Psoas muscle (tissue), 8 donors: ENCODE measurements at regions of chr14 and their contacts with region 1.

Region 1: GRCh38 chr14:75427482-75428229 is at the start of gene JDP2:
- DNase-seq: peak; percentile 95 to 98
- ATAC-seq: peak; percentile 80 to 86 (median 84)
- H3K4me3 ChIP-seq: peak within 1 kb of the TSS; percentile 80
- H3K27ac ChIP-seq: peak within 1 kb of the TSS; percentile 92
- H3K4me1 ChIP-seq: peaks cover 47% of the 10 kb centered on the region
- H3K27me3 ChIP-seq: no peaks in the 10 kb centered on the region
- CTCF ChIP-seq: peak; percentile 23
- total RNA-seq, gene JDP2: 11.0 to 49.6 (median 30.8) TPM

Region 2: GRCh38 chr14:75307700-75308379 is 119.8 kb before region 1 on chr14:
- intact Hi-C with region 1: loop called (anchors 5 kb)
- DNase-seq: peak; percentile 85 to 92
- ATAC-seq: peak; percentile 78 to 85 (median 81)
- H3K4me3 ChIP-seq: no peak overlapping the region
- H3K27ac ChIP-seq: no peak overlapping the region
- H3K4me1 ChIP-seq: peaks cover 13% of the 10 kb centered on the region
- H3K27me3 ChIP-seq: no peaks in the 10 kb centered on the region
- CTCF ChIP-seq: peak; percentile 94

Region 3: DNA sequence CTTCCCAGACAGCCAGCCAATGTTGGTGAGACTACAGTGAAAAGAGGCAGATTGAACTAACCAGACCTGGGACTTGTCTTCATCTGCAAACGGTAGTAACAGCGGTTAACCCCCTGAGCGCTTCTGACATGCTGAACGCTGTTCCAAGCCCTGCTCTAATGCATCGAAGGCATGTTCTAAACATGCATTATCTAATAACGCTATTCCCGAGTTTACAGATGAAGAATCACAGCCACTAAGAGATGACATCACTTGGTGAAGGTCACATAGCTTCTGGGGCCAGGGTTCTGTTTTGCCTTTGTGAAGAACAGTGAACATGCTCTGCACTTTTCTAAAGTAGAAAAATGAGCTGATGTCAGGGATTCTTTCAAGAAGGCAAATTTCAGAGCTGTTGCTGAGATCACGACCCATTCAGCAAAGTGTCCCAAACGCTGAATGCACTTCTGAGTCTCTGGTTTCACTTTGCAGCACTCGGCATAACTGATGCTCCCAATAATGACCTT is 93.1 kb before region 1 on chr14:
- intact Hi-C with region 1: loop called in 1 of 2 experiments (anchors 5 kb)
- DNase-seq: no peak
- ATAC-seq: no peak
- H3K4me3 ChIP-seq: no peak overlapping the region
- H3K27ac ChIP-seq: peak overlapping the region; percentile 44
- H3K4me1 ChIP-seq: peaks cover 23% of the 10 kb centered on the region
- H3K27me3 ChIP-seq: no peaks in the 10 kb centered on the region
- CTCF ChIP-seq: no peak

Region 4: DNA sequence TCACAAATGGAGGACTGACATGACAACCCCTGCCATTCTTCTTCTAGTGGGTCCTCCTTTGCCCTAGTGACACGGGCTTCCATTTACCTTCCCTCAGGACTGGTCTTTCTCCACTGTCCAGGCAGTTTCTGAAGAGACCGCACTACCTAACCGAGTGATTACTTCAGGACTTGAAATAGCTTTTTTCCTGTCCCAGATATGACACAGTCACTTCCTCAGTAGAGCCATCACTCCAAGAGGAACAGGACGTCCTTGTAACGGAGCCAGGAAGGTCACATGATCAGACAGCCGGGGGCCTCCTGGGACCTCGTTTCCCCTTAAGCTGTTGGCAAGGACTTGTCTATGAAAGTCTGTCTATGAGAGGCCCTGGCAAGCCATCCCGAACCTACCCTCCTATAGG is 86.7 kb before region 1 on chr14:
- intact Hi-C with region 1: loop called (anchors 2 to 5 kb)
- DNase-seq: peak; percentile 93 to 97
- ATAC-seq: peak; percentile 89 to 93 (median 92)
- H3K4me3 ChIP-seq: peak overlapping the region; percentile 51
- H3K27ac ChIP-seq: peak overlapping the region; percentile 92
- H3K4me1 ChIP-seq: peaks cover 41% of the 10 kb centered on the region
- H3K27me3 ChIP-seq: no peaks in the 10 kb centered on the region
- CTCF ChIP-seq: no peak

Region 5: GRCh38 chr14:75383721-75384120 is 43.9 kb before region 1 on chr14:
- intact Hi-C with region 1: no loop called
- DNase-seq: no peak
- ATAC-seq: no peak
- H3K4me3 ChIP-seq: no peak overlapping the region
- H3K27ac ChIP-seq: no peak overlapping the region
- H3K4me1 ChIP-seq: peaks cover 6% of the 10 kb centered on the region
- H3K27me3 ChIP-seq: no peaks in the 10 kb centered on the region
- CTCF ChIP-seq: no peak

Region 6: GRCh38 chr14:75469606-75470237 is 42.1 kb after region 1 on chr14:
- intact Hi-C with region 1: loop called in 1 of 2 experiments (anchors 5 kb)
- DNase-seq: peak in 1 of 2 donors; percentile 48
- ATAC-seq: peak; percentile 17 to 69 (median 24)
- H3K4me3 ChIP-seq: no peak overlapping the region
- H3K27ac ChIP-seq: peak overlapping the region; percentile 71
- H3K4me1 ChIP-seq: peaks cover 48% of the 10 kb centered on the region
- H3K27me3 ChIP-seq: no peaks in the 10 kb centered on the region
- CTCF ChIP-seq: no peak

Region 7: DNA sequence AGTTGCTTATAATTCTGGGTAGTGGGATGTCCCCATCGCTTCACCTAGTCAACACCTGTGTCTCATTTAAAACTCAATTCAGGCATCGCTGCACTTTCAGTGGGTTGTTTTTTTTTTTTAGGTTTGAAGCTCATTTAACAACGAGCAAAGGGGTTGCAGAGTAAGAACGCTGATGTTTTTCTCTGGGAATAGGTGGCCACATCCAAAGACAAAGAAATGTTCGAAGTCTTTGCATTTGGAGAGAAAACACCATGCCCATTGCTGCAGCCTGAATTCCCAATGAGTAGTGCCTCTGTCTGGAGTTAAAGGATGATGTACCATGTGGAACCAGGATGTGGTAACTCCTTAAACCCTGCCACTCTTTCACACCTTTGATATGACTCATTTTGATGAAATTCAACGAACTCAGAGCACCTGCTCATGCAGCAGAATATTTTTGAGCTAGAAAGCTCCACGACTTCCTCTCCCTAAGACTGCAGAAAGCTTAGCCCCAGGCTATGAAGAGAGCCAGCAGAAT is 59.6 kb after region 1 on chr14:
- intact Hi-C with region 1: loop called in 1 of 2 experiments (anchors 5 kb)
- DNase-seq: no peak
- ATAC-seq: no peak
- H3K4me3 ChIP-seq: no peak overlapping the region
- H3K27ac ChIP-seq: no peak overlapping the region
- H3K4me1 ChIP-seq: no peaks in the 10 kb centered on the region
- H3K27me3 ChIP-seq: no peaks in the 10 kb centered on the region
- CTCF ChIP-seq: no peak

Region 8: GRCh38 chr14:75560962-75561432 is 133.3 kb after region 1 on chr14:
- intact Hi-C with region 1: loop called in 1 of 2 experiments (anchors 5 kb)
- DNase-seq: peak; percentile 62 to 83
- ATAC-seq: peak; percentile 78 to 87 (median 85)
- H3K4me3 ChIP-seq: no peak overlapping the region
- H3K27ac ChIP-seq: no peak overlapping the region
- H3K4me1 ChIP-seq: peaks cover 29% of the 10 kb centered on the region
- H3K27me3 ChIP-seq: no peaks in the 10 kb centered on the region
- CTCF ChIP-seq: peak; percentile 79

Region 9: GRCh38 chr14:75675265-75675960 is 247.8 kb after region 1 on chr14:
- intact Hi-C with region 1: no loop called
- DNase-seq: no peak
- ATAC-seq: no peak
- H3K4me3 ChIP-seq: no peak overlapping the region
- H3K27ac ChIP-seq: no peak overlapping the region
- H3K4me1 ChIP-seq: no peaks in the 10 kb centered on the region
- H3K27me3 ChIP-seq: no peaks in the 10 kb centered on the region
- CTCF ChIP-seq: no peak